Thyroid gland (tissue), 4 donors: ENCODE measurements at regions of chr5 and their contacts with region 1.

Region 1: DNA sequence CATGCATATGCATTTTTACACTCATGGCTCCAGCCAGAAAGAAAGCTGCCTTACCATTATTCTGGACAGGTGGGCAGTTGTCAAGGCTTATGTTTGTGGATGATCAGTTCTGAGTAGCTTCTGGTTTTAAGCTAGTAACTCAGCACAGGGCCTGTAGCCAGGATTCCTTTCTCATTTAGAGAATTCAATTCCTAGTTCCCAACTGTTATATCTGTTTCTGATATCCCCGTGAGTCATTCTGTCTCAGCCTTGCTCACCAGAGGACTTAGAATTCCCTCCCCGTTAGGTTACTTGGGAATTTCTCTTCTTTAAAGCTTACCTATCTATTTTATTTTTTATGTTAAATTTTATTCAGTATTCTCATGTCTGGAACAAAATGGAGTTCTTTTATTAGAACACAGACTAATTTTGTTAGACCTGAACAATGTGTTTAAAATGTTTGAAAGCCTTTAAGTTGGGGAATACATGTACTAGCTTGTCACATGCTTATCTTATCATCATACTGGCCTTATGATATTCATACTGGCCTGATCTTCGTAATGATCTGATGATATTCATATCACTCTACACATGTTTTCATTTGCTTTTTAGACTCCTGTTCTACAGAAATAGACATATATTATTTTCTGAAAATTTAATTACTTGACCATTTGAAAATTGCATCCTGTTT is 47.1 kb downstream of the CAST start:
- DNase-seq: peak in 1 of 2 donors; percentile 25
- H3K4me3 ChIP-seq: no peak overlapping the region
- H3K27ac ChIP-seq: peak overlapping the region in 1 of 3 donors; percentile 11
- H3K4me1 ChIP-seq: peaks cover 4 to 32% of the 10 kb centered on the region in 2 donors
- H3K27me3 ChIP-seq: no peaks in the 10 kb centered on the region
- CTCF ChIP-seq: no peak
- POLR2A ChIP-seq: no peak

Region 2: DNA sequence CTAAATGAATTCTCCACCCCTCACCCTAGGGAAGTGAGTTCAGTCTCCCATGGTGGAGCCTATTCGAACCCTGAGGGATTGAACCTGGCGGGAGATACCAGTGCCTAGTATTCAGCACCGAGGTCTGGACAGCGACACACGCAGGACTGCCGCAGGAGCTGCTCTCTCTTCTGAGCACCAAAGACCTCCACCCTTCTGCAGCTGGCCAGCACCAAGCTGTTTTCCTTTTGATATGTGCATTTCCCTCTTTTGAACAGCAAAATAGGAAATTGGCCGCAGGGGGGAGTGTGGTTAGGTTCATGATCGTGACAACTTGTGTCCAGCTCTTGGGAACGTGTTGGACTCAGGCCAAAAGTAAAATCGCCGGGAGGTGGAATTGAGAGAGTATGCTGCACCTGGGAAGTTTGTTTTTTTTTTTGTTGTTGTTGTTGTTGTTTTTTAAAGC is 275.1 kb before region 1 on chr5:
- intact Hi-C with region 1: no loop called
- DNase-seq: peak; percentile 52 to 66
- H3K4me3 ChIP-seq: no peak overlapping the region
- H3K27ac ChIP-seq: no peak overlapping the region
- H3K4me1 ChIP-seq: peaks cover 5 to 10% of the 10 kb centered on the region in 2 donors
- H3K27me3 ChIP-seq: peaks cover 7% of the 10 kb centered on the region
- CTCF ChIP-seq: no peak
- POLR2A ChIP-seq: no peak

Region 3: GRCh38 chr5:96626956-96627355 is 82.3 kb before region 1 on chr5:
- intact Hi-C with region 1: no loop called
- DNase-seq: no peak
- H3K4me3 ChIP-seq: no peak overlapping the region
- H3K27ac ChIP-seq: no peak overlapping the region
- H3K4me1 ChIP-seq: no peaks in the 10 kb centered on the region
- H3K27me3 ChIP-seq: no peaks in the 10 kb centered on the region
- CTCF ChIP-seq: no peak
- POLR2A ChIP-seq: no peak

Region 4: DNA sequence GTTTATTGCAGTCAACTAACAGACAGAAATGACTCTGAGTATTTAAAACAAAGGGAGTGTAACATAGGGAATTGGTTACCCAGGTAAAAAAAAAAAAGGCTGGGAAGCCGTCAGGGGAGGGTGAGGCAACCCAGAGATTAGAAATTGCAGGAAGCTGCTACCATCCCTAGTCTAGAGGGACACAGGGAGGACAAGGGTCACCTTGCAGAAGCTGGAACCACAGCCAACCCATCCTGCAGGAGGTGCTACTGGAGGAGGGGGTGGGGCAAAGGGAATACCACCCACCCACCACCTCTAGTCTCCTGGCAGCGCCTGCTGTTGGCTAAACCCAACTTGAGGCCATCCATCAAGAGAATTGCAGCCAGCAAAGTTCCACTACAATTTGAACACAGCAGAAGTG is 40.6 kb before region 1 on chr5:
- intact Hi-C with region 1: loop called (anchors 5 kb)
- DNase-seq: no peak
- H3K4me3 ChIP-seq: no peak overlapping the region
- H3K27ac ChIP-seq: no peak overlapping the region
- H3K4me1 ChIP-seq: peaks cover 0 to 2% of the 10 kb centered on the region in 2 donors
- H3K27me3 ChIP-seq: no peaks in the 10 kb centered on the region
- CTCF ChIP-seq: no peak
- POLR2A ChIP-seq: no peak

Region 5: DNA sequence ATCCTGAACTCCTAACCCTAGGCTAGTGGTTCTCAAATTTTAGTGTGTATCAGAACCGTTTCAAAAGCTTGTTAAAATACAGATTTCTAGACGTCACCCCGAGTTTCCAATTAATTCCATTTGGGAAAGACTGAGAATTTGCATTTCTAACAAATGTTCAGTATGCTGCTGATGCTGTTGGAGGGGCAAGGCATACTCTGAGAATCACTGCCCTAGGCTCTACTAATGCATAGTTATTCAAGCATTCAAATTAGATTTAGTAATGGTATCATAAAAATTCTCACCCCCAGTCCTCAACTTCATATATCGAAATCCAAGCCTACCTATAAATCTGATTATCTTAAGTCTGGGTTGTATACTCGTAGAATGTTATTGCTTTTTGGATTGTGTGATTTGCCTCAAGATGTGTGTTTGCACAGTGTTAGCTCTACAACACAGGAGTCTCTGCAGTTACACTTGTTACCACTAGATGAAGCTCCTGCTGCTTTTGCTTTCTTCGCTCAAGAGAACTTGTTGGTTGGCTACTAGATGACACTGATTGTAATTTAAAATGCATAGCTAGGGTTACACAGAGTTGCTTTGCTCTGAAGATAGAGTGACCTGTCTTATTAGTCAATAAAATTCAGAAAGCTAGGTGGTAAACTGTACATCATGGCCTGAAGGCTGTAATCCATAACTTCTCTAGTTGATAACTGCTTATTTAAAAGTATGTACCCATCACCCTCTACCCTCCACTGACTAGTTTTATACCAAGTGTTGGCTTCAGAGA is 159.5 kb after region 1 on chr5:
- intact Hi-C with region 1: no loop called
- DNase-seq: peak in 1 of 2 donors; percentile 5
- H3K4me3 ChIP-seq: no peak overlapping the region
- H3K27ac ChIP-seq: no peak overlapping the region
- H3K4me1 ChIP-seq: no peaks in the 10 kb centered on the region
- H3K27me3 ChIP-seq: no peaks in the 10 kb centered on the region
- CTCF ChIP-seq: peak; percentile 82 to 97 (median 90)
- POLR2A ChIP-seq: no peak